Psoas muscle (tissue), 8 donors: ENCODE measurements at regions of chr2 and their contacts with region 1.

Region 1: DNA sequence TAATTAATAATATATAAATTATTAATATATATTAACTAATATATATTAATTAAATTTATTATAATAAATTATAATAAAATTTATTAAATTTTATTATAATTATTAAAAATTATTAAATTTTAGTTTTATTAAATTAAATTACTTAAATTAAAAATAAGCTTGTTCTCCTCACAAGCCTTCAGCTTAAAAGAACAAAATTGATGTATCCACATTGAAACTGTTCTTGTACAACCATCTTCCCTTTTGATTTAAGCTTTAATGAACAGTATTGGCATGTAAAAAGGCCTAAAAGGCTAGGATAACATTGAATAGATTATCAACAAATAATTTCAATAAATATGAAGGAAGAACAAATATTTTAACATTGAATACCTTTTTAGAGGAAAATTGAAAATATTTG is 62.4 kb upstream of the XIRP2 start:
- DNase-seq: no peak
- ATAC-seq: no peak
- H3K4me3 ChIP-seq: no peak overlapping the region
- H3K27ac ChIP-seq: no peak overlapping the region
- H3K4me1 ChIP-seq: no peaks in the 10 kb centered on the region
- H3K27me3 ChIP-seq: no peaks in the 10 kb centered on the region
- CTCF ChIP-seq: no peak

Region 2: DNA sequence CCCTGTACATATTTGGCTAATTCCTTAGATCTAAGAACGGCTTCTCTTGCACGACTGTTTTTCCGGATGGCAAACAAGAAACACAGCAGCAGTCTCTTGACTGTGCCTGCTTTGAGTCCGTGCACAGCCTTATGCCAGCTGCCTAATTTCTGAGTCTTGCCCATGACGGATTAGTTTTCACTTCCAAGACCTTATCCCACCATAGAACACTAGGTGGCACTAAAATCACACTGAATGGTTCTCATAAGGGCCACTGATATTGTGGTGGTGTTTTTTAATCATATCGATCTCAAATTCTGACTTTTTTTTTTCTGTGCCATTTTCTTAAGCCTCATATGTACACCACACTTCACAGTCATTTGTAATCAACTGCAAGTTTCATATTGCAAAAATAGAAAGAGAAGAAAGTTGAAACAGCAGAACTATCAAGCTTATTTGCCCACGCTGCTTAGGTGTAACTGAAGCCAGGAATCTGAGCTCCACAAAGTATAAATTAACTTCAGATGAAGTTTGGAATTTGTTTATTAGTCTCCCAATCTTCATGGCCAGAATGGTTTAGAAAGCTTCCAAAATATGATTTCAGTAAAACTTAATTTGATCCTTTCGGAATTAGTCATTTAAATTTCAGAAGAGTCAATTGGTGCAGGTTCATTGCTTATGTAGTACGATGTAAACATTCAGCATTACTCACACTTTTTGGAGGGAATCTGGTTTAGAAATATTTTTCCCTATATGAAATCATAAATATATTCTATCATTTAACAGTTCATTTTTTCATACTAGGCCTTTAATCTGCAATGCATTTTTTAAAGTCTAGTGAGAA is 286.4 kb before region 1 on chr2:
- intact Hi-C with region 1: loop called in 1 of 2 experiments (anchors 10 kb)
- DNase-seq: no peak
- ATAC-seq: peak; percentile 81 to 96 (median 85)
- H3K4me3 ChIP-seq: peak overlapping the region; percentile 41
- H3K27ac ChIP-seq: no peak overlapping the region
- H3K4me1 ChIP-seq: no peaks in the 10 kb centered on the region
- H3K27me3 ChIP-seq: no peaks in the 10 kb centered on the region
- CTCF ChIP-seq: peak; percentile 78

Region 3: DNA sequence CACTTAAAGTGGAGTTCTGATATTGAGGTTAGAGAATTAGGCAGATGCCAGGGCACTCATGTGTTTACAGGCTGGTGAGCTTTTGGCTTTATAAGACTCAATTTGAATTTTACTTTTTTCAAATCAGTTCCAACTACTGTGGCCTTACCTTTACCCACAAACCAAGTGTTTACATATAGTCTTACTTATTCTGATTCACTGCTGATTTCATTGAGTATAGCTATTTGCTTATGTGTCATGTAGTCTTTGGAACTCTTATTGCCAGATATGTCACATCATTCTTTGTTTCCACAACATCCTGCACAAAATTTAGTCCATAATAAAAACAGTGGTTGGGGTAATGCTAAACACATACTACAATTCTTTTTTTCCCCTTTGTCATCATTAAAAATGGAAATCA is 158.9 kb after region 1 on chr2:
- intact Hi-C with region 1: no loop called
- DNase-seq: no peak
- ATAC-seq: no peak
- H3K4me3 ChIP-seq: no peak overlapping the region
- H3K27ac ChIP-seq: no peak overlapping the region
- H3K4me1 ChIP-seq: no peaks in the 10 kb centered on the region
- H3K27me3 ChIP-seq: no peaks in the 10 kb centered on the region
- CTCF ChIP-seq: no peak